CD4-positive, alpha-beta memory T cell (primary cell): ENCODE measurements at regions of chr1 and their contacts with region 1.

Region 1: DNA sequence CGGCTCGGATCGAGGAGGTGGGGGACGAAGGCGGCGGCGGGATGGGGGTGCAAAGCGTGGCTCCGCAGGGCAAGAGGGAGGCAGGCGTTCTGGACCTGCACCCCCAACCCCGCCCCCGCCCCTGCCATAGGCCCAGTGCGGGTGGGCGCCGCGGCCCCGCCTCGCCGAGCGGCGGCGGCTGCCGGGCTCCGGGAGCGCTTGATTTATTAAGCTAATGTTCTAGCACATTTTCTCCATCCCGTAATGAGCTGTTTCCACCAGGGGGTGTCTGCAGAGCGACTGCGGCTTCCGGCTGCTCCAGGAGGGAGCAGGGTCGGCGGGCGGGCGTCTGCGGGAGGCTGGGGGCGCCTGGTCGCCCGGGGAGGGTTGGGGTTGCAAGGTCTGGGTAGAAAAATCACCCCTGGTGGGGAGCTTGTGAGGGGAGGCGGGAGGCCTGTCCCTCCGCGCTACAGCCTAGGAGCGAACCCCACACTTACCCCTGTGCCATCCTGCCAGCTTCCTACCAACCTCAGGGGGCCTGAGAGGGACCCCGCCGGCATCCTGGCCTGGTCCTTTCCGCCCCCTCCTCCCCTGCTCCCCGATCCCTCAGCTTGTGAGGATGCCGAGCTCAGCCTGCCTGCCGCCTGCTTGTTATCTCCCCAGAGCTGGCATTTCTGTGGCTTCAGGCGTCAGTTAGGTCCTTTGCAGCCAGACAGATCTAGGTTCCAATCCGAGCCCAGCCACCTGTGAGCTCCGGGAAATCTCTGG is 48.5 kb upstream of the ACOT11 start:
- DNase-seq: peak; percentile 36 to 54 (median 43)
- H3K4me3 ChIP-seq: peak overlapping the region in 1 of 2 donors; percentile 24
- H3K4me3 Mint-ChIP-seq: peak overlapping the region; percentile 39 to 82 (median 70)
- H3K27ac ChIP-seq: no peak overlapping the region
- H3K27ac Mint-ChIP-seq: no peak overlapping the region
- H3K4me1 ChIP-seq: peaks cover 13% of the 10 kb centered on the region
- H3K4me1 Mint-ChIP-seq: peaks cover 3 to 9% (median 5%) of the 10 kb centered on the region in 4 donors
- H3K27me3 ChIP-seq: peaks cover 6% of the 10 kb centered on the region
- H3K27me3 Mint-ChIP-seq: peaks cover 35% of the 10 kb centered on the region in 2 donors

Region 2: GRCh38 chr1:53889304-53890298 is 609.9 kb before region 1 on chr1 and contains the start of gene YIPF1:
- CTCF ChIA-PET with region 1: no interaction called
- POLR2A ChIA-PET with region 1: no interaction called
- intact Hi-C with region 1: loop called (anchors 10 kb)
- DNase-seq: peak; percentile 82 to 86 (median 84)
- H3K4me3 ChIP-seq: peak within 1 kb of the TSS; percentile 59 to 79
- H3K4me3 Mint-ChIP-seq: peak within 1 kb of the TSS; percentile 92 to 98 (median 96)
- H3K27ac ChIP-seq: peak within 1 kb of the TSS; percentile 50
- H3K27ac Mint-ChIP-seq: peak within 1 kb of the TSS; percentile 89 to 96 (median 94)
- H3K4me1 ChIP-seq: peaks cover 28% of the 10 kb centered on the region
- H3K4me1 Mint-ChIP-seq: peaks cover 28 to 49% (median 38%) of the 10 kb centered on the region in 4 donors
- H3K27me3 ChIP-seq: no peaks in the 10 kb centered on the region
- H3K27me3 Mint-ChIP-seq: peaks cover 0 to 2% of the 10 kb centered on the region in 2 donors
- total RNA-seq, gene YIPF1: 14.8 to 15.2 TPM

Region 3: GRCh38 chr1:54474639-54475251 is 24.8 kb before region 1 on chr1:
- CTCF ChIA-PET with region 1: no interaction called
- POLR2A ChIA-PET with region 1: no interaction called
- intact Hi-C with region 1: no loop called
- DNase-seq: peak in 2 of 5 donors; percentile 33 to 38
- H3K4me3 ChIP-seq: peak overlapping the region; percentile 22 to 57
- H3K4me3 Mint-ChIP-seq: peak overlapping the region; percentile 78 to 93 (median 84)
- H3K27ac ChIP-seq: peak overlapping the region; percentile 47
- H3K27ac Mint-ChIP-seq: peak overlapping the region; percentile 87 to 97 (median 95)
- H3K4me1 ChIP-seq: peaks cover 53% of the 10 kb centered on the region
- H3K4me1 Mint-ChIP-seq: peaks cover 34 to 58% (median 45%) of the 10 kb centered on the region in 4 donors
- H3K27me3 ChIP-seq: no peaks in the 10 kb centered on the region
- H3K27me3 Mint-ChIP-seq: peaks cover 0 to 2% of the 10 kb centered on the region in 2 donors

Region 4: GRCh38 chr1:54542120-54542961 is 42.8 kb after region 1 on chr1:
- CTCF ChIA-PET with region 1: interaction called, 4 read pairs
- POLR2A ChIA-PET with region 1: no interaction called
- intact Hi-C with region 1: loop called (anchors 1 kb)
- DNase-seq: peak; percentile 42 to 61 (median 49)
- H3K4me3 ChIP-seq: peak overlapping the region; percentile 22 to 55
- H3K4me3 Mint-ChIP-seq: peak overlapping the region; percentile 75 to 89 (median 83)
- H3K27ac ChIP-seq: no peak overlapping the region
- H3K27ac Mint-ChIP-seq: peak overlapping the region in 4 of 7 donors; percentile 37 to 88 (median 52)
- H3K4me1 ChIP-seq: peaks cover 16% of the 10 kb centered on the region
- H3K4me1 Mint-ChIP-seq: peaks cover 9 to 24% (median 11%) of the 10 kb centered on the region in 4 donors
- H3K27me3 ChIP-seq: no peaks in the 10 kb centered on the region
- H3K27me3 Mint-ChIP-seq: no peaks in the 10 kb centered on the region